ENCODE measurements at regions of chr20 and their contacts with region 1.

Region 1: DNA sequence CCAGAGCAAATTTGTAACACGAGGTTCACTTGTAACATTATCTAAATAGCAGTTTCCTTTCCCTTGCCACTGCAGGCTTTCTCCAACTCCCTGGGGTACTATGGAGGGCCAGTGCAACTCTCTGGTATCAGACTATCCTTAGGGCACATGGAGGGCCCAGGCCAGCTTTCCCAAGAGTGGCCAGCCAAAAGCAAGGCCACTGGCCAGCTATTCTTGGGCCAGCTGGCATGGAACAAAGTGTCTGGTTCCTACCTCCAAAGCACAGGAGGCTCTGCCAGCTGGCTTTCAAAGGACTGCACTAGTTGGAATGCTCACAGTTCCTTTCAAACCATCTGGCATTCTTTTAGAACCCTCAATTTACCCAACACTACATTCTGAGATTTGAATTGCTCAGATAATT is 8.7 kb downstream of the RNF24 start:
- DNase-seq: no peak
- ATAC-seq: no peak
- H3K4me3 ChIP-seq: no peak overlapping the region
- H3K4me3 Mint-ChIP-seq: no peak overlapping the region
- H3K27ac ChIP-seq: no peak overlapping the region
- H3K27ac Mint-ChIP-seq: no peak overlapping the region
- H3K4me1 ChIP-seq: no peaks in the 10 kb centered on the region
- H3K4me1 Mint-ChIP-seq: peaks cover 19% of the 10 kb centered on the region
- H3K27me3 ChIP-seq: no peaks in the 10 kb centered on the region
- H3K27me3 Mint-ChIP-seq: no peaks in the 10 kb centered on the region
- CTCF ChIP-seq: no peak

Region 2: DNA sequence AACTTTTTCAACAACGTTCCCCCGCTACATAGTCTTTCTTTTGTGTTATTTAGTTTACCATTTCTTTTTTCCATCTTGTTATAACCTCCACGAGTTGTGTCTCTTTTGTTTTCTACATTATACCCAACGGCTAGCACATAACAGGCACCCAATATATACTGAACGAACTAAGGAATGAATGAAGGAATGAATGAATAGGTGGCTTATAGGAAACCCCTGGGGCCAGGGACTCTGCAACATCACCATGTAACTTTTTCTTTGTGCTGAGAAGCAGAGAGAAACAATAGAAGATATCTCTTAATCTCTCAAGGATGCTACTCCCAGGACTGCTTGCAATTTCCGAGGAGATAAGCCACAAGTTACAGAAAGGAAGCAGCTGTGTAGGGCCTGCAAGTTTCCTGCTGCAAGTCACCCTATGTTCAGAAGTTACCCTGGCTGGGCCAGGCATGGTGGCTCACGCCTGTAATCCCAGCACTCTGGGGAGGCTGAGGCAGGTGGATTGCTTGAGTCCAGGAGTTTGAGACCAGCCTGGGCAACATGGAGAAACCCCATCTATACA is 167.4 kb before region 1 on chr20:
- CTCF ChIA-PET with region 1: no interaction called
- POLR2A ChIA-PET with region 1: no interaction called
- intact Hi-C with region 1: no loop called
- DNase-seq: no peak
- ATAC-seq: no peak
- H3K4me3 ChIP-seq: no peak overlapping the region
- H3K4me3 Mint-ChIP-seq: peak overlapping the region; percentile 31
- H3K27ac ChIP-seq: no peak overlapping the region
- H3K27ac Mint-ChIP-seq: peak overlapping the region; percentile 42
- H3K4me1 ChIP-seq: peaks cover 6% of the 10 kb centered on the region
- H3K4me1 Mint-ChIP-seq: peaks cover 8% of the 10 kb centered on the region
- H3K27me3 ChIP-seq: no peaks in the 10 kb centered on the region
- H3K27me3 Mint-ChIP-seq: no peaks in the 10 kb centered on the region
- CTCF ChIP-seq: no peak

Region 3: GRCh38 chr20:3964719-3965118 is 41.9 kb before region 1 on chr20:
- CTCF ChIA-PET with region 1: no interaction called
- POLR2A ChIA-PET with region 1: no interaction called
- intact Hi-C with region 1: no loop called
- DNase-seq: no peak
- ATAC-seq: no peak
- H3K4me3 ChIP-seq: no peak overlapping the region
- H3K4me3 Mint-ChIP-seq: no peak overlapping the region
- H3K27ac ChIP-seq: no peak overlapping the region
- H3K27ac Mint-ChIP-seq: no peak overlapping the region
- H3K4me1 ChIP-seq: no peaks in the 10 kb centered on the region
- H3K4me1 Mint-ChIP-seq: peaks cover 12% of the 10 kb centered on the region
- H3K27me3 ChIP-seq: no peaks in the 10 kb centered on the region
- H3K27me3 Mint-ChIP-seq: no peaks in the 10 kb centered on the region
- CTCF ChIP-seq: no peak

Region 4: DNA sequence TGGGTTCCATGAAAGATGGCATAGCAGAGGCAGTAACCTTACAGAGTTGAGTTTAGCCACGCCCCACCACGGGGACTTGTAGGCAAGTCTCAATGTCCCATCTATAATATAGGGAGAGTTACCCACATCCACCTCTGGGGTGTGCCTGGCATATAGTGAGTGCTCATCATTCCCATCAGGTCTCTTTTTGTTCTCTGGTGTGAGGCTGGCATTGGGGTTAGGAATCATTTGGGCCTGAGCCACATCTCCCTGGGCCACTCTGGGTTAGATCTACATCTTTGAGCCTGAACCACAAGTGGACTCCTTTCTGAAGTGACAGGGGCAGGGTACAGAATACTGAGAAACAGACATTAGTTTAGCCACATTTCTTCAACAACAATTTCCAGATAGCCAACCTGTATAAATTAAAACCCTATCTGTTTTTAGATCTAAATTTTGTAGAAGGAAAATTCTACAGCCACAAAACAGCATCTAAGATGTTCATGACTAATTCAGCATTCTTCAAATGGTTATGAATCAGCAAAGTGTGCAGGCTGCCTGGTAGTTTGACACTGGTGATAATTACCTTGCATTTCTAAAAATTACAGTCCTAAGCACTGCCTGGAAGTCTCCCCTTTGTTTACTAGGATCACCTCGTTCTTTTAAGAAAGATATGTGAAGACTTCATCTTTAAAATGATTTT is 11.4 kb before region 1 on chr20:
- CTCF ChIA-PET with region 1: interaction called, 12 read pairs
- POLR2A ChIA-PET with region 1: interaction called, 9 read pairs
- intact Hi-C with region 1: no loop called
- DNase-seq: peak in 4 of 14 experiments; percentile 29 to 54 (median 40)
- ATAC-seq: peak; percentile 51
- H3K4me3 ChIP-seq: no peak overlapping the region
- H3K4me3 Mint-ChIP-seq: peak overlapping the region; percentile 2
- H3K27ac ChIP-seq: no peak overlapping the region
- H3K27ac Mint-ChIP-seq: peak overlapping the region; percentile 22
- H3K4me1 ChIP-seq: peaks cover 23% of the 10 kb centered on the region
- H3K4me1 Mint-ChIP-seq: peaks cover 54% of the 10 kb centered on the region
- H3K27me3 ChIP-seq: no peaks in the 10 kb centered on the region
- H3K27me3 Mint-ChIP-seq: no peaks in the 10 kb centered on the region
- CTCF ChIP-seq: no peak

Region 5: DNA sequence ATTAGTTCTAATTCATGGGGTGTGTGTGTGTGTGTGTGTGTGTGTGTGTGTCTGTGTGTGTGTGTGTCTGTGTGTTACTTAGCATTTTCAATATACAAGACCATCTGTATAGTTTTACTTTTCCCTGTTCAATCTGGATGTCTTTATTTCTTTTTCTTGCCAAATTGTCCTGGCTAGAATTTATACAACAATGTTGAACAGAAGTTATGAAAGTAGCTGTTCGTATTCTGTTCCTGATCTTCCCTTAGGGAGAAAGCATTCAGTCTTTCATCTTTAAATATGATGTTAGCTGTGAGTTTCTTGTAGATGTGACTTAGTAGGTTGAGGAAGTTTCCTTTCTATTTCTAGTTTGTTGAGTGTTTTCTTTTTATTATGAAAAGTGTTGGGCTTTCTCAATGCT is 343.5 kb after region 1 on chr20:
- CTCF ChIA-PET with region 1: no interaction called
- POLR2A ChIA-PET with region 1: no interaction called
- intact Hi-C with region 1: no loop called
- DNase-seq: no peak
- ATAC-seq: no peak
- H3K4me3 ChIP-seq: no peak overlapping the region
- H3K4me3 Mint-ChIP-seq: no peak overlapping the region
- H3K27ac ChIP-seq: no peak overlapping the region
- H3K27ac Mint-ChIP-seq: no peak overlapping the region
- H3K4me1 ChIP-seq: no peaks in the 10 kb centered on the region
- H3K4me1 Mint-ChIP-seq: no peaks in the 10 kb centered on the region
- H3K27me3 ChIP-seq: peaks cover 1 to 4% of the 10 kb centered on the region in 2 experiments
- H3K27me3 Mint-ChIP-seq: peaks cover 33% of the 10 kb centered on the region
- CTCF ChIP-seq: no peak